ENCODE measurements at regions of chr15 and their contacts with region 1.

Region 1: GRCh38 chr15:29139540-29140459 is 129.8 kb downstream of the NSMCE3 start:
- DNase-seq: peak in 5 of 10 donors; percentile 45 to 78 (median 48)
- H3K4me3 ChIP-seq: peak overlapping the region in 38 of 59 donors; percentile 1 to 54 (median 28)
- H3K27ac ChIP-seq: no peak overlapping the region
- H3K27me3 ChIP-seq: no peaks in the 10 kb centered on the region
- CTCF ChIP-seq: peak; percentile 51 to 89 (median 78)

Region 2: GRCh38 chr15:29269485-29270168 is 129.8 kb after region 1 on chr15 and contains the start of gene NSMCE3:
- intact Hi-C with region 1: loop called in 1 of 2 experiments (anchors 5 kb)
- DNase-seq: peak; percentile 85 to 95 (median 92)
- H3K4me3 ChIP-seq: peak within 1 kb of the TSS; percentile 55 to 100 (median 86)
- H3K27ac ChIP-seq: peak within 1 kb of the TSS; percentile 70 to 97 (median 94)
- H3K27me3 ChIP-seq: no peaks in the 10 kb centered on the region
- CTCF ChIP-seq: peak in 37 of 56 donors; percentile 4 to 57 (median 23)
- total RNA-seq, gene NSMCE3: 5.2 to 12.0 (median 9.5) TPM

Region 3: GRCh38 chr15:29476503-29477080 is 336.8 kb after region 1 on chr15:
- intact Hi-C with region 1: loop called in 1 of 2 experiments (anchors 5 kb)
- DNase-seq: no peak
- H3K4me3 ChIP-seq: no peak overlapping the region
- H3K27ac ChIP-seq: peak overlapping the region in 2 of 59 donors; percentile 13 to 29
- H3K27me3 ChIP-seq: no peaks in the 10 kb centered on the region
- CTCF ChIP-seq: no peak